SK-N-SH (cell line): ENCODE measurements at regions of chr20 and their contacts with region 1.

Region 1: GRCh38 chr20:38805502-38805957 is at the start of gene PPP1R16B:
- DNase-seq: peak; percentile 94
- H3K4me3 ChIP-seq: peak within 1 kb of the TSS; percentile 56
- H3K27ac ChIP-seq: peak within 1 kb of the TSS in 1 of 2 experiments; percentile 77; a peak in 2 of 4 replicates
- H3K4me1 ChIP-seq: peaks cover 0 to 22% of the 10 kb centered on the region in 2 experiments; a peak in 1 of 4 replicates
- H3K27me3 ChIP-seq: peaks cover 32% of the 10 kb centered on the region
- CTCF ChIP-seq: no peak
- EP300 ChIP-seq: no peak
- RAD21 ChIP-seq: no peak
- polyA plus RNA-seq, gene PPP1R16B: 0.28 and 0.91 TPM in 2 replicates

Region 2: GRCh38 chr20:38790200-38791053 is 15.1 kb before region 1 on chr20:
- CTCF ChIA-PET with region 1: interaction called, 10 read pairs
- POLR2A ChIA-PET with region 1: no interaction called
- DNase-seq: peak; percentile 51
- H3K4me3 ChIP-seq: no peak overlapping the region; a peak in 1 of 4 replicates
- H3K27ac ChIP-seq: no peak overlapping the region
- H3K4me1 ChIP-seq: 0 out of 4 replicates have a peak, but pooled peaks cover 0 to 4% of the 10 kb centered on the region in 2 experiments
- H3K27me3 ChIP-seq: peaks cover 5% of the 10 kb centered on the region; the same call in 1 of the 2 replicates
- CTCF ChIP-seq: peak; percentile 67
- EP300 ChIP-seq: no peak
- RAD21 ChIP-seq: peak; percentile 53

Region 3: DNA sequence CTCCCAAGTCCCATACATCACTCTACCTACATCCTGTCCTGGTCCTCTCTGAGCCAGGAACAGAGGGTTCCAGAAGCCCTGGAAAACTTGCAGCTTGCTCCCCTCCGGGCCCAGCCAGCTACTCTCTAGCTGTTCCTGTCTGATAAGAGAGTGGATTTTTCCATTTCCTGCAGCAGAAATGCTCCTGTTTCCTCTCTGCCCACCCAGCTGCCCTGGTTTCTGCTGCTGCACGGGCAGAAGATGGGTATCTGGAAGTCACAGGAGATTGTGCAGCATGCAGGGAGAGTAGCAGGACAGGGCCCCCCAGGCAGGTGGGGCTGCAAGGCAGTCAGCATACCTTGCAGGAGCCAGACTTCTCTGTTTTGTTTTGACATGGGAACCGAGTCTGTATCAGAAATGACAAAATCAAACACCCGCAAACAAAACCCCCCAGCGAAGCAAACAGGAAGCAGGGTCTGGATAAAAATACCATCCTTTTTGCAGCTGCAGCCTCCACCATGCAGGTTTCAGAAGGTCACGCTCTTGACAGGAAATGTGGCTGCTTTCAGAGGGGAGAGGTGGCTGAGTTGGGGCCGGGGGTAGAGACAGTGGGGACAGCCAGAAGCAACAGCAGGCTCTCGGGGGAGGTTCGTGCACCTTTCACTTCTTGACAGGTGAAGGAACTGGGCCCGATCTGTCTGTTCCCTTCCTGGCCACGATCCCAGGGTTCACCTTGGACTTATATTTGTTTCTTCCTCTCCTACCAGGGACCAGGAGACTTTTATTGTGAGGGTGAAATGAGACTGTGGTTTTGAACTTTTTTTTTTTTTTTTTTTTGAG is 69.9 kb after region 1 on chr20:
- CTCF ChIA-PET with region 1: interaction called, 8 read pairs
- POLR2A ChIA-PET with region 1: interaction called, 34 read pairs
- DNase-seq: peak; percentile 74
- H3K4me3 ChIP-seq: no peak overlapping the region; a peak in 1 of 4 replicates
- H3K27ac ChIP-seq: peak overlapping the region in 1 of 2 experiments; percentile 100; a peak in 3 of 4 replicates
- H3K4me1 ChIP-seq: peaks cover 0 to 86% of the 10 kb centered on the region in 2 experiments; a peak in 2 of 4 replicates
- H3K27me3 ChIP-seq: peaks cover 16% of the 10 kb centered on the region; the same call in 1 of the 2 replicates
- CTCF ChIP-seq: no peak
- EP300 ChIP-seq: peak in 1 of 2 experiments; percentile 96
- RAD21 ChIP-seq: peak; percentile 36

Region 4: GRCh38 chr20:38883081-38883980 is 77.8 kb after region 1 on chr20:
- CTCF ChIA-PET with region 1: interaction called, 10 read pairs
- POLR2A ChIA-PET with region 1: interaction called, 16 read pairs
- DNase-seq: peak; percentile 89
- H3K4me3 ChIP-seq: no peak overlapping the region
- H3K27ac ChIP-seq: peak overlapping the region in 1 of 2 experiments; percentile 99; a peak in 2 of 4 replicates
- H3K4me1 ChIP-seq: peaks cover 0 to 75% of the 10 kb centered on the region in 2 experiments; a peak in 2 of 4 replicates
- H3K27me3 ChIP-seq: no peaks in the 10 kb centered on the region
- CTCF ChIP-seq: peak; percentile 13; the same call in 1 of the 2 replicates
- EP300 ChIP-seq: peak; percentile 67 to 98; a peak in 3 of 4 replicates
- RAD21 ChIP-seq: peak; percentile 23; the same call in 1 of the 2 replicates

Region 5: DNA sequence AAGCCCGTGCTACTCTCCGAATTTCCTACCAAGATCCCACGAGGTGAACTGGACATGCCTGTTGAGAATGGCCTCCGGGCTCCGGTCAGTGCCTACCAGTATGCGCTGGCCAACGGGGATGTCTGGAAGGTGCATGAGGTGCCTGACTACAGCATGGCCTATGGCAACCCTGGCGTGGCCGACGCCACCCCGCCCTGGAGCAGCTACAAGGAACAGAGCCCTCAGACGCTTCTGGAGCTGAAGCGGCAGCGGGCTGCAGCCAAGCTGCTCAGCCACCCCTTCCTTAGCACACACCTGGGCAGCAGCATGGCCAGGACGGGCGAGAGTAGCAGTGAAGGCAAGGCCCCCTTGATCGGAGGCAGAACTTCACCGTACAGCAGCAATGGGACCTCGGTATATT is 112.6 kb after region 1 on chr20:
- CTCF ChIA-PET with region 1: no interaction called
- POLR2A ChIA-PET with region 1: no interaction called
- DNase-seq: no peak
- H3K4me3 ChIP-seq: no peak overlapping the region
- H3K27ac ChIP-seq: no peak overlapping the region; a peak in 1 of 4 replicates
- H3K4me1 ChIP-seq: no peaks in the 10 kb centered on the region
- H3K27me3 ChIP-seq: peaks cover 11% of the 10 kb centered on the region; the same call in 1 of the 2 replicates
- CTCF ChIP-seq: no peak
- EP300 ChIP-seq: no peak
- RAD21 ChIP-seq: no peak